ENCODE measurements at regions of chr2 and their contacts with region 1.

Region 1: GRCh38 chr2:233353769-233354499 is at the start of gene DGKD:
- DNase-seq: no peak
- total RNA-seq, gene DGKD: 38.1 to 40.3 TPM

Region 2: GRCh38 chr2:233301811-233302210 is 52.1 kb before region 1 on chr2:
- intact Hi-C with region 1: loop called in 1 of 2 experiments (anchors 2 kb)
- DNase-seq: no peak

Region 3: GRCh38 chr2:233443468-233444183 is 89.7 kb after region 1 on chr2:
- intact Hi-C with region 1: loop called (anchors 5 to 10 kb)
- DNase-seq: peak; percentile 90

Region 4: GRCh38 chr2:233449081-233449901 is 95.4 kb after region 1 on chr2:
- intact Hi-C with region 1: loop called (anchors 5 to 10 kb)
- DNase-seq: peak; percentile 82

Measured in posterior vena cava (tissue), 2 donors.